ENCODE measurements at regions of chrX and their contacts with region 1.

Region 1: DNA sequence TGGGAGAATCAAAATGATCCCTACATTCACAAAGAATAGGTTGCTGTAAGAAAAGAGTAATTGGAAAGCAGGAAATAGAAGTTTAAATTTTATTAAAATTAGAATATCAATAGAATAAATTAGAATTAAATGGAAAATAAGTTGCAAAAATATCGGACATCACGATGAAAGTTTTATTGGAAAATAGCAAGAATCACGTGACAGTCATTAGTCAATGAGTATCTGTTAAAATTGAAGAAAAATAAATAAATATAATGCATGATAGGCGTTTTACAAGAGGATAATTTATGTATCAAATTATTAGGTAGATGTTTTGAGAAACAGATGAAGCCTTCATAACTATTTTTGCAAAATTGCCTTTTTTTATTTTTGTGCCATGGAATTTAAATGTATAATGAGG is 78.2 kb upstream of the DCAF12L2 start:
- DNase-seq: no peak
- H3K4me3 ChIP-seq: no peak overlapping the region
- H3K27ac ChIP-seq: no peak overlapping the region
- H3K4me1 ChIP-seq: no peaks in the 10 kb centered on the region
- H3K27me3 ChIP-seq: no peaks in the 10 kb centered on the region
- CTCF ChIP-seq: no peak

Region 2: DNA sequence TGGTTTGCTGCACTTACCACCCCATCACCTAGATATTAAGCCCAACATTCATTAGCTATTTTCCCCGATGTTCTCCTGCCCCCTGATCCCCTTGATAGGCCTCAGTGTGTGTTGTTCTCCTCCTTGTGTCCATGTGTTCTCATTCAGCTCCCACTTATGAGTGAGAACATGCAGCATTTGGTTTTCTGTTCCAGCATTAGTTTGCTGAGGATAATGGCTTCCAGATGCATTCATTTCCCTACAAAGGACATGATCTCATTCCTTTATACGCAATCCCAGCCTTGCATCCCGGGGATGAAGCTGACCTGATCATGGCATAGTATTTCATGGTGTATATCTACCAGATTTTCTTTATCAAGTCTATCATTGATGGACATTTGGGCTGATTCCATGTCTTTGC is 20.8 kb after region 1 on chrX:
- CTCF ChIA-PET with region 1: no interaction called
- POLR2A ChIA-PET with region 1: no interaction called
- intact Hi-C with region 1: loop called (anchors 1 kb)
- DNase-seq: no peak
- H3K4me3 ChIP-seq: no peak overlapping the region
- H3K27ac ChIP-seq: no peak overlapping the region
- H3K4me1 ChIP-seq: no peaks in the 10 kb centered on the region
- H3K27me3 ChIP-seq: no peaks in the 10 kb centered on the region
- CTCF ChIP-seq: no peak

Region 3: DNA sequence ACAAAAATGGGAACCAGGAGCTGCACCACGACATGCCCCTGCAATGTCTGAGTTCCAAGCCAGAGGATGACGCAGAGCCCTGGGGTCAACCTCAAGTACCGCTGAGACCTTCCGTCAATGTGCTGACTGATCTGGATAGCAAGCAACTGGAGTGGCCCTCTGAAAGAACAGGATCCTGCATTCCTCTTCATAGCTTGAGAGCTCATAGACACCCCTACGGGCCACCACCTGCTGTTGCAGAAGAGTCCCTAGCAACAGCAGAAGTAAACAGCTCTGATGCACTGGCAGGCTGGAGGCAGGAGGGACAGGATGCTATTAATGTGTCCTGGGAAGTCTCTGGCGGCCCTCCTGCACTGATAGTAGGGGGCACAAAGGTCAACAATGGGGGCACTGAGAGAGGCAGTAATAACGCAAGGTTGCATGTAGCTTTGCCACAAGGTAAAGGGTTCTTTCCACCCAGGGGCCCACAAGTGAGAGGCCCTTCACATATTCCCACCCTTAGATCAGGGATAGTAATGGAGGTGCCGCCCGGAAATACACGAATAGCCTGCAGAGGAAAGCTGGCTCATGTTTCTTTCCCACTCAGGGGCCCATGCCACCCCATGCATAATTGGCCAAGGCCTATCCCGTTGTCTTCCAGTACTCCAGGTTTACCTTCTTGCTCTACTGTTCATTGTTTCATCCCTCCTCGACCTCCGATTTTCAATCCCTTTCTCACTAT is 576.6 kb after region 1 on chrX:
- CTCF ChIA-PET with region 1: no interaction called
- POLR2A ChIA-PET with region 1: no interaction called
- intact Hi-C with region 1: no loop called
- DNase-seq: no peak
- H3K4me3 ChIP-seq: no peak overlapping the region
- H3K27ac ChIP-seq: no peak overlapping the region
- H3K4me1 ChIP-seq: no peaks in the 10 kb centered on the region
- H3K27me3 ChIP-seq: no peaks in the 10 kb centered on the region
- CTCF ChIP-seq: no peak

Measured in A673 (cell line).